HCT116 (cell line): ENCODE measurements at regions of chr2 and their contacts with region 1.

Region 1: GRCh38 chr2:72745679-72746368 is 80.0 kb downstream of the EXOC6B start:
- DNase-seq: peak; percentile 48
- ATAC-seq: peak; percentile 50
- H3K4me3 ChIP-seq: no peak overlapping the region
- H3K27ac ChIP-seq: no peak overlapping the region
- H3K4me1 ChIP-seq: peaks cover 0 to 3% of the 10 kb centered on the region in 2 experiments; a peak in 1 of 4 replicates
- H3K27me3 ChIP-seq: no peaks in the 10 kb centered on the region
- CTCF ChIP-seq: peak; percentile 50 to 85 (median 59); a peak in 5 of 6 replicates
- POLR2A ChIP-seq: no peak
- RAD21 ChIP-seq: peak; percentile 79

Region 2: GRCh38 chr2:71530641-71531332 is 1215.0 kb before region 1 on chr2:
- CTCF ChIA-PET with region 1: no interaction called
- POLR2A ChIA-PET with region 1: no interaction called
- RAD21 ChIA-PET with region 1: no interaction called
- intact Hi-C with region 1: loop called (anchors 5 kb)
- DNase-seq: peak; percentile 31
- ATAC-seq: peak; percentile 85
- H3K4me3 ChIP-seq: no peak overlapping the region; a peak in 1 of 4 replicates
- H3K27ac ChIP-seq: no peak overlapping the region
- H3K4me1 ChIP-seq: peaks cover 0 to 18% of the 10 kb centered on the region in 2 experiments; a peak in 2 of 4 replicates
- H3K27me3 ChIP-seq: no peaks in the 10 kb centered on the region
- CTCF ChIP-seq: peak; percentile 65 to 82 (median 71); a peak in 5 of 6 replicates
- POLR2A ChIP-seq: no peak
- RAD21 ChIP-seq: peak; percentile 80

Region 3: DNA sequence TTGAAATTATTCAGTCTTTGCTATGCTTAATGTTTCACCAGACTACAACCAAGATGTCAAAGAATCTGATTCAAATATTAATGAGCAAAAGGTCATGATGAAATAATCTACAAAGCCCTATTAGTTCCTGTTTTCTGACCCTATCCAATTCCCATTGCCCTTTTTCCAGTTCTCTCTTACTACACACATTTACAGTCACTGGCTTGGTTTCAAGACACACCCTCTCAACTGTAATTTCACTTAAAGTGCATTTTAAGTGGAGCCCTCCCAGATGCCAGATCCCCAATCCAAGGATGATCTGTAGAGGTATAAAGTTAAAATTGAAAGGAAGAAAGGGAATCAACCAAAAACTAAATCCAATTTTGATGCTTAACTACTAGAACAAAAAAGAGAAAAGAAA is 351.2 kb before region 1 on chr2:
- CTCF ChIA-PET with region 1: no interaction called
- POLR2A ChIA-PET with region 1: no interaction called
- RAD21 ChIA-PET with region 1: no interaction called
- intact Hi-C with region 1: no loop called
- DNase-seq: no peak
- ATAC-seq: no peak
- H3K4me3 ChIP-seq: no peak overlapping the region
- H3K27ac ChIP-seq: no peak overlapping the region
- H3K4me1 ChIP-seq: no peaks in the 10 kb centered on the region
- H3K27me3 ChIP-seq: no peaks in the 10 kb centered on the region
- CTCF ChIP-seq: no peak
- POLR2A ChIP-seq: no peak
- RAD21 ChIP-seq: no peak

Region 4: DNA sequence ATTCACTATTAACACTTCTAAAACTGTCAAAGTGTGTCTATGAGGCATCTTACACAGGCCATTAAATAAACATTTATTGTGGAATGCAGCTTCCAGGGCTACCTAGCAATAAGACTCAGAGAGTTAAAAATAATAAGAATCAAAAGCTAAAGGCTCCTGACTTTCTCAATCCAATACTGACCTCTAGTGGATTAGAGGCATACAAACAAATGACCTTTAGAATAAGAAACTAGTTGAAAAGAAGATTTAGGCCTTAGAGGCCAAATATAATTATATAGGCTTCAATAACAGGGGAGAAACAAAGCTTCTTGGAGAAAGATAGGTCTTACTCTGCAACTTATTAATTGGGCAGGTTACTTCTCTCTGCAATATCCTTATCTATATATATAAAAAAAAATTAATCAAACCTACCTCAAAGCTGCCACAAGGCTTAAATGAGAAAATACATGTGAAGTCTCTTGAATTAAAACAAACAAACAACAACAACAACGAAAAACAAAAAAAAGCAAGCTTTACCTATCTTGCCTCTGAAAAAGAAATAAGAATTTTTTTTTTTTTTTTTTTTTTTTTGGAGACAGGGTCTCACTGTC is 166.1 kb before region 1 on chr2:
- CTCF ChIA-PET with region 1: interaction called, 11 read pairs
- POLR2A ChIA-PET with region 1: no interaction called
- RAD21 ChIA-PET with region 1: no interaction called
- intact Hi-C with region 1: loop called (anchors 5 kb)
- DNase-seq: peak; percentile 26
- ATAC-seq: peak; percentile 50; the same call in 1 of the 2 replicates
- H3K4me3 ChIP-seq: no peak overlapping the region
- H3K27ac ChIP-seq: no peak overlapping the region
- H3K4me1 ChIP-seq: no peaks in the 10 kb centered on the region
- H3K27me3 ChIP-seq: no peaks in the 10 kb centered on the region
- CTCF ChIP-seq: peak; percentile 54 to 76 (median 74); a peak in 5 of 6 replicates
- POLR2A ChIP-seq: no peak
- RAD21 ChIP-seq: peak; percentile 87